CD8-positive, alpha-beta T cell (primary cell): ENCODE measurements at regions of chr11 and their contacts with region 1.

Region 1: DNA sequence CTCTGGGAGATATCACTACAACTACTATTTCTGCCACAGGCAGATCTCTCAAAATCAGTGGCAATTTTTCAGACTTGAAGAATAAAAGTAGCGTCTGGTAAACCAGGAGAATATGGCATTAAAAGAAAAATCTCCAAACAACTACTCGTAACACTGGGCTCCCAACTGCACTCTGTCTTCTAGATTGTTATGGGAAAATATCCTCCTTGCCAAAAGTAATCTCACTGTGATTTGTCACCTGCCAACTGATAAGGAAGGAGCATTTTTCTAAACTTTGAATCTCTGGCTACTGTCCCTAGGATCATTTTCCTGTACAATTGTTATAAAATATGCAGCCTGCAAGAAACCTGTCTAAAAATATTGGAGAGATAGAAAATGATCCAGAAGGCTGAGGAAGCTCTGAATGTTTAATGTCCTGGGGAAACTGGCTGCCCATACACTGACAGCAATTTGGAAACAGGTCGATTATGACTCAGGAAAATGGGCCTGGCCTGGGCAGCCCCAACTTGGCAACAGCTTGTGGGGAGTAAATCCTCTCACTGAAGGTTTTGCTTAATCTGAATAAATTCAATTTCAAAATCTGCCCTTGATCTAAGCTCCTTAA is 90.5 kb upstream of the DBX1 start:
- DNase-seq: no peak
- ATAC-seq: no peak
- H3K4me3 ChIP-seq: no peak overlapping the region
- H3K4me3 Mint-ChIP-seq: no peak overlapping the region
- H3K27ac ChIP-seq: no peak overlapping the region
- H3K27ac Mint-ChIP-seq: no peak overlapping the region
- H3K4me1 ChIP-seq: no peaks in the 10 kb centered on the region
- H3K4me1 Mint-ChIP-seq: no peaks in the 10 kb centered on the region
- H3K27me3 ChIP-seq: peaks cover 0 to 2% of the 10 kb centered on the region in 2 experiments
- H3K27me3 Mint-ChIP-seq: peaks cover 7% of the 10 kb centered on the region
- CTCF ChIP-seq: no peak

Region 2: GRCh38 chr11:19919050-19919561 is 331.6 kb before region 1 on chr11:
- CTCF ChIA-PET with region 1: no interaction called
- POLR2A ChIA-PET with region 1: no interaction called
- intact Hi-C with region 1: no loop called
- DNase-seq: no peak
- ATAC-seq: no peak
- H3K4me3 ChIP-seq: no peak overlapping the region
- H3K4me3 Mint-ChIP-seq: no peak overlapping the region
- H3K27ac ChIP-seq: no peak overlapping the region
- H3K27ac Mint-ChIP-seq: no peak overlapping the region
- H3K4me1 ChIP-seq: no peaks in the 10 kb centered on the region
- H3K4me1 Mint-ChIP-seq: no peaks in the 10 kb centered on the region
- H3K27me3 ChIP-seq: no peaks in the 10 kb centered on the region
- H3K27me3 Mint-ChIP-seq: peaks cover 12% of the 10 kb centered on the region
- CTCF ChIP-seq: no peak

Region 3: GRCh38 chr11:20193307-20193706 is 57.4 kb before region 1 on chr11:
- CTCF ChIA-PET with region 1: no interaction called
- POLR2A ChIA-PET with region 1: interaction called, 3 read pairs
- intact Hi-C with region 1: loop called in 1 of 2 experiments (anchors 5 kb)
- DNase-seq: no peak
- ATAC-seq: no peak
- H3K4me3 ChIP-seq: no peak overlapping the region
- H3K4me3 Mint-ChIP-seq: no peak overlapping the region
- H3K27ac ChIP-seq: no peak overlapping the region
- H3K27ac Mint-ChIP-seq: no peak overlapping the region
- H3K4me1 ChIP-seq: no peaks in the 10 kb centered on the region
- H3K4me1 Mint-ChIP-seq: no peaks in the 10 kb centered on the region
- H3K27me3 ChIP-seq: no peaks in the 10 kb centered on the region
- H3K27me3 Mint-ChIP-seq: peaks cover 9% of the 10 kb centered on the region
- CTCF ChIP-seq: no peak

Region 4: DNA sequence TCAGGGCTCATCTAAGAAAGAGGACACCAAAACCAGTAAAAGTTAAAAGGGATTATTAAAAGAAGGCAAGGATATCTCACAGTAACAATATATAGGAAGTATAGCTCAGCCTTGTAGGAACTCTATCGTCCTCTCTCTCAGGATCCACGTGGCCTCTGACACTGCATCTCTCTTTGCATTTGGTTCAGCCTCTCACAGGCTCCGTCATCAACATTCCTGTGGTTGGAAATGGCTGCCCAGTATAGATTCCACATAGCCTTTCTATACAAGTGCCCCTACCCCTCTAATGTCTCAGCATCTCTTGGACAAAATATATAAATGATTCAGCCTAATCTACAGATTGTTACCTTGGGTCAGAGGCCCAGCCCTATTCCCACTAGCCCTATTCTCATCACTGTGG is 10.8 kb after region 1 on chr11:
- CTCF ChIA-PET with region 1: no interaction called
- POLR2A ChIA-PET with region 1: no interaction called
- intact Hi-C with region 1: no loop called
- DNase-seq: no peak
- ATAC-seq: no peak
- H3K4me3 ChIP-seq: no peak overlapping the region
- H3K4me3 Mint-ChIP-seq: no peak overlapping the region
- H3K27ac ChIP-seq: no peak overlapping the region
- H3K27ac Mint-ChIP-seq: no peak overlapping the region
- H3K4me1 ChIP-seq: no peaks in the 10 kb centered on the region
- H3K4me1 Mint-ChIP-seq: no peaks in the 10 kb centered on the region
- H3K27me3 ChIP-seq: peaks cover 0 to under 1% of the 10 kb centered on the region in 2 experiments
- H3K27me3 Mint-ChIP-seq: peaks cover 22% of the 10 kb centered on the region
- CTCF ChIP-seq: no peak